IMR-90 (cell line): ENCODE measurements at regions of chr10 and their contacts with region 1.

Region 1: GRCh38 chr10:75099952-75100763 is 11.3 kb upstream of the SAMD8 start:
- DNase-seq: peak; percentile 52
- ATAC-seq: peak; percentile 97
- H3K4me3 ChIP-seq: no peak overlapping the region
- H3K27ac ChIP-seq: no peak overlapping the region
- H3K4me1 ChIP-seq: peaks cover 6% of the 10 kb centered on the region; the same call in 1 of the 2 replicates
- H3K27me3 ChIP-seq: no peaks in the 10 kb centered on the region
- CTCF ChIP-seq: peak; percentile 98
- POLR2A ChIP-seq: peak; percentile 59; the same call in 1 of the 2 replicates
- RAD21 ChIP-seq: peak; percentile 98

Region 2: DNA sequence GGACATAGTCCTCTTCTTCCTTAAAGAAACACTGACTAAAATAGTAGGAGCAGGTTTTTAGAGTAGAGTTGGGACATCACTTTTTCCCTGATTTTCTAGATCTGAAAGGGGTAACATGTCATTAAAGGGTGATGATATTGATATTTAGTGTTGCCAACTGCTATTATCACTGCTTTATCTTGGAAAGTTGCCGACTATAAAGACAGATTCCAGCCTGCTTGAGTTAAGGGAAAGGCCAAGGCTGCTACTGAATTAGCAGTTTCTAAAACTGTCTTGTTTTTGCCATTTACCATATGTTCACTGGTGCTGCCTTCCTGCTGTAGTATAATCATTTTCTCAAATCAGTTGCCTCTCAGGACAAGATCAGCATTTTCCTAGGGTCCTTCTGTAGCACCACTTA is 979.2 kb before region 1 on chr10:
- CTCF ChIA-PET with region 1: no interaction called
- POLR2A ChIA-PET with region 1: no interaction called
- dilution Hi-C with region 1: no loop called
- in situ Hi-C with region 1: no loop called
- intact Hi-C with region 1: loop called (anchors 10 kb)
- DNase-seq: no peak
- ATAC-seq: no peak
- H3K4me3 ChIP-seq: no peak overlapping the region
- H3K27ac ChIP-seq: no peak overlapping the region
- H3K4me1 ChIP-seq: peaks cover 10% of the 10 kb centered on the region
- H3K27me3 ChIP-seq: no peaks in the 10 kb centered on the region
- CTCF ChIP-seq: no peak
- POLR2A ChIP-seq: no peak
- RAD21 ChIP-seq: no peak

Region 3: GRCh38 chr10:74244097-74244685 is 856.0 kb before region 1 on chr10:
- CTCF ChIA-PET with region 1: interaction called, 6 read pairs
- POLR2A ChIA-PET with region 1: no interaction called
- dilution Hi-C with region 1: no loop called
- in situ Hi-C with region 1: loop called (anchors 5 kb)
- intact Hi-C with region 1: loop called (anchors 1 kb)
- DNase-seq: peak; percentile 73
- ATAC-seq: no peak; the same call in 1 of the 2 replicates
- H3K4me3 ChIP-seq: no peak overlapping the region
- H3K27ac ChIP-seq: no peak overlapping the region
- H3K4me1 ChIP-seq: no peaks in the 10 kb centered on the region
- H3K27me3 ChIP-seq: no peaks in the 10 kb centered on the region
- CTCF ChIP-seq: peak; percentile 63
- POLR2A ChIP-seq: no peak
- RAD21 ChIP-seq: peak; percentile 63

Region 4: GRCh38 chr10:74249865-74250264 is 850.3 kb before region 1 on chr10:
- CTCF ChIA-PET with region 1: interaction called, 6 read pairs
- POLR2A ChIA-PET with region 1: no interaction called
- dilution Hi-C with region 1: no loop called
- in situ Hi-C with region 1: loop called (anchors 5 kb)
- intact Hi-C with region 1: no loop called
- DNase-seq: peak; percentile 62
- ATAC-seq: no peak
- H3K4me3 ChIP-seq: no peak overlapping the region
- H3K27ac ChIP-seq: no peak overlapping the region
- H3K4me1 ChIP-seq: no peaks in the 10 kb centered on the region
- H3K27me3 ChIP-seq: no peaks in the 10 kb centered on the region
- CTCF ChIP-seq: no peak
- POLR2A ChIP-seq: no peak
- RAD21 ChIP-seq: no peak

Region 5: DNA sequence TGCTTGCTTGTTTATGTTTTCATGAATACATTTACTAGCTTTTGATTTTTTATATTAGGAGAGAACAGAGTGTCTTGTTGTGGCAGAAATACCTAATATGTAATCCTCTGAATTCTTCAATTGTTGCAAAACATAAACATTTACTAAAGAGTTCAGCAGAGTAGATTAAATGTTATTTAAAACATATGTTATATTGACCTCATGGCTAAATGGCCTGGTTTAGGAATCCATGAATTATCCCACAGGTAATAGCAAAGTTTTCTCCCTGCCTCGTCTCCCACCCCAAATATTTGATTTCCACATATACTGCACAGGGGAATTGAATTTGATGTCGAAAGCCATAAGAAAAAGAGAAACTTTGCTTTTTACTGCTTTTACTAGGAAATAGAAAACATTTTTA is 837.3 kb before region 1 on chr10:
- CTCF ChIA-PET with region 1: interaction called, 3 read pairs
- POLR2A ChIA-PET with region 1: no interaction called
- dilution Hi-C with region 1: no loop called
- in situ Hi-C with region 1: no loop called
- intact Hi-C with region 1: loop called (anchors 1 kb)
- DNase-seq: no peak
- ATAC-seq: no peak
- H3K4me3 ChIP-seq: no peak overlapping the region
- H3K27ac ChIP-seq: no peak overlapping the region
- H3K4me1 ChIP-seq: peaks cover 2% of the 10 kb centered on the region; the same call in 1 of the 2 replicates
- H3K27me3 ChIP-seq: no peaks in the 10 kb centered on the region
- CTCF ChIP-seq: no peak
- POLR2A ChIP-seq: no peak
- RAD21 ChIP-seq: no peak

Region 6: DNA sequence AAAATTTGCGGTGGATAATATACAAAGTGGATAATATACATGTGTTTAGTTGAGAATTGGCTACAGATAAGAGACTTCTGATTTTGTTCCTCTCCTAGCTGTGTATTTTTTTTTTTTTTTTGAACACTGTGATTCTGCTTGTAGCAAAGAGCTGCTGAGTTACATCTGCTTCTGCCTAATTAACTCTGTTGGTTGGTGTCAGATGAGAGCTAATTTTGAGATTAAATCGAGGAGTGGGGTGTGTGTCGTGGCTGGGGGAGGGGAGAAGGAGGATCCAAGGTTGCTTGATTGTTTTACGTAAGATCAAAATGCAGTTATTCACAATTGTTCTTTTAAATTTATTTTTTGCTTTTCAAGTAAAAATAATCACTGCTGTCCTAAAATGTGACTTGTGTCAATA is 262.4 kb before region 1 on chr10:
- CTCF ChIA-PET with region 1: no interaction called
- POLR2A ChIA-PET with region 1: no interaction called
- dilution Hi-C with region 1: no loop called
- in situ Hi-C with region 1: no loop called
- intact Hi-C with region 1: loop called (anchors 5 kb)
- DNase-seq: no peak
- ATAC-seq: no peak
- H3K4me3 ChIP-seq: no peak overlapping the region
- H3K27ac ChIP-seq: no peak overlapping the region
- H3K4me1 ChIP-seq: peaks cover 11% of the 10 kb centered on the region
- H3K27me3 ChIP-seq: no peaks in the 10 kb centered on the region
- CTCF ChIP-seq: no peak
- POLR2A ChIP-seq: no peak
- RAD21 ChIP-seq: no peak

Region 7: GRCh38 chr10:75035975-75036708 is 64.0 kb before region 1 on chr10:
- CTCF ChIA-PET with region 1: no interaction called
- POLR2A ChIA-PET with region 1: no interaction called
- dilution Hi-C with region 1: no loop called
- in situ Hi-C with region 1: no loop called
- intact Hi-C with region 1: no loop called
- DNase-seq: peak; percentile 68
- ATAC-seq: peak; percentile 37
- H3K4me3 ChIP-seq: no peak overlapping the region
- H3K27ac ChIP-seq: no peak overlapping the region
- H3K4me1 ChIP-seq: peaks cover 8% of the 10 kb centered on the region
- H3K27me3 ChIP-seq: no peaks in the 10 kb centered on the region
- CTCF ChIP-seq: no peak
- POLR2A ChIP-seq: no peak
- RAD21 ChIP-seq: no peak